HepG2 (cell line): ENCODE measurements at regions of chr22 and their contacts with region 1.

Region 1: GRCh38 chr22:20429254-20430100 is 8.1 kb downstream of the SCARF2 start:
- DNase-seq: no peak
- ATAC-seq: no peak
- H3K4me3 ChIP-seq: no peak overlapping the region
- H3K27ac ChIP-seq: no peak overlapping the region
- H3K4me1 ChIP-seq: peaks cover 16% of the 10 kb centered on the region
- H3K27me3 ChIP-seq: no peaks in the 10 kb centered on the region
- CTCF ChIP-seq: no peak
- EP300 ChIP-seq: no peak
- POLR2A ChIP-seq: no peak
- RAD21 ChIP-seq: no peak

Region 2: DNA sequence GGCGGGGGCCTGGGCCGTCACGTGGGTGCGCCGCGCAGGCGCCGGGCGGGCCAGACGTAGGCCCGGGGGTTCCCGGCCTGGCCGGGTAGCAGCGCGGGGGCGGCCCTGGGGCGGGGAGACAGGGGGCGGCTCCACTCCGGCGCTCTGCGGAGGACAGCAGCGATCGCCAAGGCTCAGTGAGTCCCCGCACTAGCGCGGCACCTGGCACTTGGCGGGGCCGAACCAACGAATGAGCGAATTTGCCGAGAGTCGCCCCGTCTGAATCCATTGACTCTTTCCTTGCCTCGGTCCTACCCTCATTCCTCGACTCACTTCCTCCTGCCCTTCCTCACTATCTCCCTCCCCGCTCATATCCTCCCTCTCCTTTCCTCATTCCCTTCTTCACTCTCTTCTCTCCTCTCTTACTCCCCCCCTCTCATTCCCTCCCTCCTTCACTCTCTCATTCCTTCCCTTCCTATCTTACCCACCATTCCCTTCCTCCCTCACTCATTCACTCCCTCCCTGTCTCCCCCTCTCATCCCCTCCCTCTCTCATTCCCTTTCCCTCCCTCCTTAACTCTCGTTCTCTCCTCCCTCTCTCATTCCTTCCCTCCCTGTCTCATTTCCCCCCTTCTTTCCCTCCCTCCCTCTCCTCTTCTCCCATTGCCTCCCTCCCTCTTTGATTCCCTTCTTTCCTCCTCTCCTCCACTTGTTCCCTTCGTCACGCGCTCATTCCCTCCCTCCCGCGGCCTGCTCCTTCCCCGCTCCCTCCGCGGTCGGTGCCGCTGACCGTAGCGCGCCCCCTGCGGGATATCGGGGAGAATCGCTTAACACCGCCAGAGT is 66.6 kb after region 1 on chr22:
- CTCF ChIA-PET with region 1: no interaction called
- POLR2A ChIA-PET with region 1: no interaction called
- in situ Hi-C with region 1: no loop called
- intact Hi-C with region 1: loop called (anchors 10 kb)
- DNase-seq: peak; percentile 76
- ATAC-seq: peak; percentile 95
- H3K4me3 ChIP-seq: peak overlapping the region; percentile 65 to 88 (median 73)
- H3K27ac ChIP-seq: peak overlapping the region; percentile 81
- H3K4me1 ChIP-seq: peaks cover 40% of the 10 kb centered on the region
- H3K27me3 ChIP-seq: no peaks in the 10 kb centered on the region; a peak in 1 of 5 replicates
- CTCF ChIP-seq: peak; percentile 95
- EP300 ChIP-seq: no peak
- POLR2A ChIP-seq: peak; percentile 85 to 87
- RAD21 ChIP-seq: peak; percentile 50